HAP-1 (cell line): ENCODE measurements at regions of chr11 and their contacts with region 1.

Region 1: GRCh38 chr11:92941676-92942571 is 27.5 kb upstream of the MTNR1B start:
- DNase-seq: peak; percentile 40 to 41
- H3K4me3 ChIP-seq: no peak overlapping the region
- H3K4me1 ChIP-seq: no peaks in the 10 kb centered on the region
- H3K27me3 ChIP-seq: no peaks in the 10 kb centered on the region

Region 2: GRCh38 chr11:93099806-93100205 is 157.9 kb after region 1 on chr11:
- in situ Hi-C with region 1: no loop called
- DNase-seq: no peak
- H3K4me3 ChIP-seq: no peak overlapping the region
- H3K4me1 ChIP-seq: no peaks in the 10 kb centered on the region
- H3K27me3 ChIP-seq: no peaks in the 10 kb centered on the region

Region 3: DNA sequence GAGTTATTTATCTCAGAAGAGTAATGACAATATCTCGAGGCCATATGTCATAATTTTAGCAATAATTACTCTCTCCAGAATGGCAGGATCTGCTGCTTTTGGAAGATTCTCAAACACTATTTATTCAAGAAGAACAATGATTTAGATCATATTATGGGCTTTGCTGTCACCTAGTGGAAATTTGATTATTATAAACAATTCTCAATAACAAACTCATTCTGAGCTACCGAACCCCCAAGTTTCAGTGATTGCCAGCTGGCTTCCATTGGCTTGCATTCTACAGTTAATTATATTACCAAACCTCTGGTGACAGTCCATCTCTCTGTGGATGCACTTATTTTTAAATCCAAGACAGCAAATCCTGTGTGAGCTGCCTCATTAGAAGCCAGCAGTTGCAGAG is 283.7 kb after region 1 on chr11:
- in situ Hi-C with region 1: loop called (anchors 10 kb)
- DNase-seq: no peak
- H3K4me3 ChIP-seq: no peak overlapping the region
- H3K4me1 ChIP-seq: no peaks in the 10 kb centered on the region
- H3K27me3 ChIP-seq: peaks cover 6% of the 10 kb centered on the region; the same call in 1 of the 2 replicates

Region 4: DNA sequence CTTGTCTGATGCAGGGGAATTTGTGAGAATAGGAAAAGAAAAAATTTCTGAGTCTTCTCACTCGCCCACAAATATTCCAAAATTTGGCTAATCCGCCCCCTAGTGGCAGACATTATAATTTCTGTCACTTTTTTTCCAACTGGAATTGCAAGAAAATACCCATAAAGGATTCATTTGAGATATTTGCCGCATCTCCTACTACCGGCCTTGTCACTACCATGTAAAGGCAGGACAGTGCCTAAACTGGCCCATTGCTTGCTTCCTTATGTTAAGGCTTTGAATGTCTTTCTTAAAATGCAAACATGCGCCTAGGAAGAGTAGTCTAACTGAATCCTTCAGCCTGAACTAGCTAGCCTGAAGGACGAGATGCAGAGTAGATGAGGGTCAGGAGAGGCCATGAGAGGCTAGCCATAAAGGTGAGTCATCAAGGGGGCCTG is 710.3 kb after region 1 on chr11:
- in situ Hi-C with region 1: loop called (anchors 25 kb)
- DNase-seq: peak; percentile 44 to 65
- H3K4me3 ChIP-seq: no peak overlapping the region
- H3K4me1 ChIP-seq: no peaks in the 10 kb centered on the region
- H3K27me3 ChIP-seq: peaks cover 29% of the 10 kb centered on the region